Head of caudate nucleus (tissue), 42 donors: ENCODE measurements at regions of chr10 and their contacts with region 1.

Region 1: DNA sequence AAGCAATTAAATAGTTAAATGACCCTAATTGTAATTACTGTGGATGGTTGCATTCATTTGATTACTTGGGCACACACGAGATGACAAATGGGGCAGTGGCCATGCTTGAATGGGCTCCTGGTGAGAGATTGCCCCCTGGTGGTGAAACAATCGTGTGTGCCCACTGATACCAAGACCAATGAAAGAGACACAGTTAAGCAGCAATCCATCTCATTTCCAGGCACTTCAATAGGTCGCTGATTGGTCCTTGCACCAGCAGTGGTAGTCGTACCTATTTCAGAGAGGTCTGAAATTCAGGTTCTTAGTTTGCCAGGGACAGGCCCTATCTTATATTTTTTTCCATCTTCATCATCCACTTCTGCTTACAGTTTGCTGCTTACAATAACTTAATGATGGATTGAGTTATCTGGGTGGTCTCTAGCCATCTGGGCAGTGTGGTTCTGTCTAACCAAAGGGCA is 8.3 kb downstream of the PCBD1 start:
- DNase-seq: peak; percentile 68 to 94 (median 85)

Region 2: GRCh38 chr10:70549962-70550458 is 330.1 kb before region 1 on chr10:
- intact Hi-C with region 1: loop called (anchors 5 kb)
- DNase-seq: peak in 41 of 42 donors; percentile 42 to 90 (median 75)

Region 3: DNA sequence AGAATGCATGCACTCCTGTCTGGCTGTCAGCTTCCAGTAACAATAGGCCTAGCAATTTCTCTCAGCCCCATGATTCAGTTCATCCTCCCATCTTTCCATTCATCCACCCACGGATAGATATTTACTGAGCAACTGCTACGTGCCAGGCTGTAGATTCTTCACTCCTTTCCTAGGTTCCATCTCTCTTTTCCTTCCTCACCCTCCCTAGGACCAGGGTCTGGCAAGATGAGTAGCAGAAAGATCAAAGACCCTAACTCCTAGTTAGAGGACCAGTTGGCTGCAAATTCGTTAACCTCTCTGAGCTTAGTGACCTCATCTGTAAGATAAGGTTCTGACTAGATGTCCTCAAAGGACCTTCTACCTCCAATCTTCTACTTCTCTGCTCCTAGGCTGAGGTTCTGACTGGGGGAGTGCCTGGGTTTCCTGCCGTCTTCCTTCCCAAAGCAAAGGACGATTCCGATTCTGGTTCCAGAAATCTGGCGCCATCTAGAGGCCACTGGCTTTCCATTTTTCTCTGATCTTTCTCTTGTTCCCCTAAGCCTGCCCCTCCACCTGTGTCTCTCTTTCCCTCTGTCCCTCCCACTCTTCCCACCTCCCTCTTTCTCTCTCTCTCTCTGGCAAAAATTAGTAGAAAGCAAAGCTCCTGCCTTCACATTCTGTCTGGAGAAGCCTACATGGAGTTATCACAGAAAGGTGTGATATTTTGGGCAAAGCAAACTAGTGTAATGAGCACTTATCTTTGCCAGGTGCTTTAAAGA is 121.2 kb before region 1 on chr10:
- intact Hi-C with region 1: loop called (anchors 5 kb)
- DNase-seq: peak; percentile 51 to 95 (median 84)

Region 4: GRCh38 chr10:70791386-70792039 is 88.6 kb before region 1 on chr10:
- intact Hi-C with region 1: no loop called
- DNase-seq: peak in 2 of 42 donors; percentile 2 to 7

Region 5: DNA sequence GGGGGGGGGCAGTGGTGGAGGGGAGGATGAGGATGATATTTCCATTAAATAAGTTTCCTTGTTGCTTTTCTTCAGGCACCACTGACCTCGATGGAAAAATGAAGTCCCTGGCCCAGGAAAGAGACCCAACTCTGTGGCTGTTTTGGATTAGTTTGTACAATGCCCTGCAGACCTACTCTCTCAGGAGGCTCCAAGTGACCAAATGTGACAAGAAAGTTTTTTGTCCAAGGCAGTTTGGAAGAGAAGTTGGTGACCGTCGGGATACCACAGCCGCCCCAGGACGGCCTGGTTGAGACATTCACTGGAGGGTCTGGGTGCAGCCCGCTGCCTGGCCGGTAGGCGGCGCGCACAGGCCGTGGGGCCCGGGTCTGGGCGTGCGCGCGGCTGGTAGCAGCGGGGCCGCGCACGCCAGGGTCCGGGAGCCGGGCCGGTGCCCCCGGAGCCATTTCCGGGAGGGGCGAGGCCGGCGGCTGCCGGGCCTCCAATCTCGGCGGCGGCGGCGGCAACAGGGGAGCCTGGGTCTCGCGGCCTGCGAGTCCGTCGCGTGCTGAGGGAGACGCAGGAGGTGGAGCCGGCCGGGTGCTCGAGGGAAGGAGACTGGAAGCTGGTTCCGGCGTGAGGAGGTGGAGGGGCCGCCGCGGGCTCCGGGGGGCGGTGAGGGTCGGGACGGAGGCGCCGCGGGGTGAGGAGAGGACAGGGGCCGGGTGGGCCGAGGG is 64.4 kb before region 1 on chr10 and contains the start of gene SGPL1:
- intact Hi-C with region 1: loop called (anchors 5 kb)
- DNase-seq: peak; percentile 68 to 93 (median 84)

Region 6: DNA sequence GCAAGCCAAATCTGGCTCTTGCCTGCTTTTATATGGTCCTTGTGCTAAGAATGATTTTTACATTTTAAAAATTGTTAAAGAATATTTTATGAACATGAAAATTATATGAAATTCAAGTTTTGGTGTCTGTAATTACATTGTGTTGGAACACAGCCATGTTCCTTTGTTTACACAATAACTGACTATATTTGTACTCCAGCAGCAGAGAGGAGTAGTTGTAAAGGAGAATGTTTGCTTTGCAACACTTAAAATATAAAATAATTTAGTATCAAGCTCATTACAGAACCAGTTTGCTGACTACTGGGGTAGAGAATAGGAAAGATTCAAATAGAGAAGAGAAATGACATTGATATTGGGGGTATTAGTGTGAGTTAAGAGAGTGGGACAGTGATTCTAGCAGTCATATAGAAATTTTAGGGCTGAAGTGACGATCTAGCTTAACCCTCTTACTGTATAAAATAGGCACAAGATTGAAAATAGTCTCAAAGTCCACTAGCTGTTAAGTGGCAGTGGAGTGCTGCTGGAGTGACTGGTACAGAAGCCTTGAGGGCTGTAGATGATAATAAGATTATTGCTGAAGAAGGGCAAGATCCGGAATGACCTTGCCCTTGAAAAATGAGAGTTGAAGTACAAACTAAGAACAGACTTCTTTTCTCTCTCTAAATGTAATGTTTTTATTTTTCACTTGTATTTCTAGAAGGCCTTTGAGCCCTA is 36.2 kb before region 1 on chr10:
- intact Hi-C with region 1: no loop called
- DNase-seq: no peak